ENCODE measurements at regions of chr10 and their contacts with region 1.

Region 1: DNA sequence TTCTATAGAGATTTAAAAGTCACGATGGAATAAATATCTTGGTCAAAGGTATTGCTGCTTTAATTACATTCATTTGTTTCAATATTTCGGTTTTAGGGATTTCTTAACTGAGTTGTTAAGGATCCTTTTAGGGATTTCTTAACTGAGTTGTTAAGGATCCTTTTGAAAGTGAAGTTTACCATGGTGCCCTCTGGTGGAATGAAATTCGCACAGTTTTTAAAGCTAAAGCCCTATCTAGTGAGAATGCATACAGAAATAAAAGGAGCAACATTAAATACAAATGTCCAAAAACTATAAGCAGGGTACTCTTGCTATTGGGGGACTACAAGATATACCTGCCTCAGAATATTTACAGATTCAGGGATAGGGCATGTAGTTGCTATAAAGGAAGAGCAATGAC is 193.7 kb downstream of the RNLS start:
- DNase-seq: peak in 1 of 2 donors; percentile 75
- ATAC-seq: no peak
- H3K4me3 ChIP-seq: no peak overlapping the region
- H3K4me3 Mint-ChIP-seq: no peak overlapping the region
- H3K27ac ChIP-seq: no peak overlapping the region
- H3K27ac Mint-ChIP-seq: no peak overlapping the region
- H3K4me1 ChIP-seq: peaks cover 11% of the 10 kb centered on the region
- H3K4me1 Mint-ChIP-seq: peaks cover 0 to 17% of the 10 kb centered on the region in 2 donors
- H3K27me3 ChIP-seq: no peaks in the 10 kb centered on the region
- H3K27me3 Mint-ChIP-seq: peaks cover 0 to 5% of the 10 kb centered on the region in 2 donors
- CTCF ChIP-seq: peak; percentile 58

Region 2: DNA sequence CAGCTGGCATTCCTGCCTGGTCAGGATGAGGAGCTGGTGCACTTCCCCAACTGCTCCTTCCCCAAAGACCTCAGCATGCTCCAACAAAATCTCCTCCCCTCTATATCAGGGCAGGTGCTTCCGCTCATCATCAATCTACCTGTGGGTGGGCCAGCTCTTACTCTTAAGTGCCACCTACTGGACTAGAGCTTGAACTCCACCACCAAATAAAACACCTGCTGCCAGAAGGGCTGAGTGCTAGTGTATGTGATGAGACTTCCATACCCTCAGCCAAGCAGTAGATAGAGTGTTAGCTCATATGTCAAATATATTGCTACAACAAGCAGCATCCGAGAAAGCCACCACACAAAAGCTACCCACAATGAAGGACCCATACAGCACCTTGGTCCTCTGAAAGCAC is 70.7 kb before region 1 on chr10:
- intact Hi-C with region 1: loop called (anchors 2 kb)
- DNase-seq: peak in 1 of 2 donors; percentile 20
- ATAC-seq: no peak
- H3K4me3 ChIP-seq: no peak overlapping the region
- H3K4me3 Mint-ChIP-seq: no peak overlapping the region
- H3K27ac ChIP-seq: no peak overlapping the region
- H3K27ac Mint-ChIP-seq: no peak overlapping the region
- H3K4me1 ChIP-seq: no peaks in the 10 kb centered on the region
- H3K4me1 Mint-ChIP-seq: no peaks in the 10 kb centered on the region
- H3K27me3 ChIP-seq: no peaks in the 10 kb centered on the region
- H3K27me3 Mint-ChIP-seq: peaks cover 0 to 8% of the 10 kb centered on the region in 2 donors
- CTCF ChIP-seq: no peak

Region 3: GRCh38 chr10:88417387-88418030 is 28.1 kb after region 1 on chr10:
- intact Hi-C with region 1: no loop called
- DNase-seq: no peak
- ATAC-seq: no peak
- H3K4me3 ChIP-seq: no peak overlapping the region
- H3K4me3 Mint-ChIP-seq: no peak overlapping the region
- H3K27ac ChIP-seq: no peak overlapping the region
- H3K27ac Mint-ChIP-seq: no peak overlapping the region
- H3K4me1 ChIP-seq: no peaks in the 10 kb centered on the region
- H3K4me1 Mint-ChIP-seq: no peaks in the 10 kb centered on the region
- H3K27me3 ChIP-seq: no peaks in the 10 kb centered on the region
- H3K27me3 Mint-ChIP-seq: no peaks in the 10 kb centered on the region
- CTCF ChIP-seq: no peak

Measured in natural killer cell (primary cell).